T47D (cell line): ENCODE measurements at regions of chr14 and their contacts with region 1.

Region 1: GRCh38 chr14:35438910-35439713 is 34.6 kb upstream of the NFKBIA start:
- DNase-seq: peak in 1 of 2 experiments; percentile 42

Region 2: DNA sequence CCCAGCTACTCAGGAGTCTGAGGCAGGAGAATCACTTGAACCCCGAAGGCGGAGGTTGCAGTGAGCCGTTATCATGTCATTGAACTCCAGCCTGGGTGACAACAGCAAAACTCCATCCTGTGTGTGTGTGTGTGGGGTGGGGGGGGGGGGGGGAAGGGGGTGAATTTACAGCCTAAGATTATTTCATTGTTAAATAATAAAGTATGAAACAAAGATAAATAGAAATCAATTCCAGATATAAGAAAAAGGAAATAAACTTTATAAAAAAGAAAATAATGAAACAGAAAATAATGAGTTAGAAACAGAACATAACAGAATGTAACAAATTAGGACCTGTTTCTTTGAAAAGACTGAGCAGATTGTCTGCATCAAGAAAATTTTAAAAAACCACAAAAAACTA is 178.4 kb after region 1 on chr14:
- in situ Hi-C with region 1: no loop called
- DNase-seq: no peak

Region 3: GRCh38 chr14:35687335-35687939 is 248.3 kb after region 1 on chr14:
- in situ Hi-C with region 1: loop called (anchors 25 kb)
- DNase-seq: peak in 1 of 2 experiments; percentile 74